ENCODE measurements at regions of chr6 and their contacts with region 1.

Region 1: DNA sequence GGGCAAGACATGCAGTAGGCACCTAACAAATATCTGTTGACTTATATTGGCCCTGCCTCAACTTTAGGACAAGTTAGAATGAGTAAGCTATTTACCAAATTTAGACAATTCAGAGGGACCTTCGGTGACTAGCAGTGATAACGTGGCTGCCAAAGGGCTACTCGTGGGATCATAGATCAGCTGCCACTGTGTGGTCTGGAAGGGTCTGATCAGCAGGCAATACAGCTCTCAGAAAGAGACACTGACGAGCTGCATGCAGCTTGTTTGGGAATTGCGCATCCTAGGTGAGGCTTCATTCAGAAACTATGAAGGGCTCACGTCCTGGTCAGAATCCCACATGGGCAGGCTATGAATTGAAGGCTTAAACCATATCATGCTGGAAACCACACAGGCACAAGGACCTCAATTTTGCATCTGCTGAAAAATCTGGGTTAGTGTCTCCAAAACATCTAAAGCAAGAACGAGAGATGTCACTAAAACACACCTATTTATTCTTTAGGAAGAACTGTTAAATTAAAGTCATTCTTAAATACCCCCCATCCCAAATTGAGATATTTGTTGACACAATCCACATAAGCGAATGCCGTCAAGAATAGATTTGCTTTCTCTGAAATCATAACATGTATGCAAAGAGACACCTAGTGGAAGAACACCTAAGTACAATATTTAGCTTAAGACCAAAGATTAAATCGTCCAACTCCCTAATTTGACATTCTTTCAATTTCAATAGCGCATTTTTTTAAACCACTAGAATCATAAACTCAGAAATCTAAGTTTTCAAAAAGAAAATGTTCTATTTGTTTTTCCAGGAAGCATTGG is 79.6 kb downstream of the IPCEF1 start:
- DNase-seq: no peak
- H3K4me3 ChIP-seq: peak overlapping the region in 2 of 3 donors; percentile 35 to 48
- H3K27ac ChIP-seq: no peak overlapping the region
- H3K4me1 ChIP-seq: no peaks in the 10 kb centered on the region
- H3K27me3 ChIP-seq: no peaks in the 10 kb centered on the region
- CTCF ChIP-seq: peak; percentile 63 to 74 (median 66)
- POLR2A ChIP-seq: no peak

Region 2: DNA sequence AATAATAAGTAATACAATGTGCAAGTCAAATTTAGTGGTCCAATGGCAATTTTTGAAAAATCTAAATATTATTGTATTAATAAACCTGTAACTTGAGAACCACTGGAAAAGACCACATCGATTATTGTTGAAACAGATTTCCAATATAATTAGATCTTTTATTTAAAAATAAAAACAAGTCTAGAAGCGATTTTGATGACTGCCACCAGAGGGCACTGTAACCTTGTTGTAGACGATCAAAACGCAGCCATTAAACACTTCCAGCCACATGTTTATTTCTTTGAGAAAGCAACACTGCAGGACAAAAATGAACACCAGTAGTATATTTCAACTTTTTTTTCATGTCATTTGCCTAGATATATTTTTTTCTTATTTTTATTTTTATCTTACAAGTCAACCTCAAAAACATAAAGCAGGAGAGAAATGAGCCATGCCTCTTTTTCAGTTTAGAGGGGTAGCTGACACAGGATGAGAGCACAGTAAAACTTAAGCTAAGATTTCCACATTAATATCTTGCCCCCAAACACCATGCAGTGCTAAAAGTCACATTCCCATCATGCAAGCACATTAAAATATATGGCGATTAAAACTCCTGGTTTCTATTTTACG is 122.6 kb before region 1 on chr6:
- intact Hi-C with region 1: loop called (anchors 5 kb)
- DNase-seq: peak in 1 of 2 donors; percentile 38
- H3K4me3 ChIP-seq: no peak overlapping the region
- H3K27ac ChIP-seq: no peak overlapping the region
- H3K4me1 ChIP-seq: no peaks in the 10 kb centered on the region
- H3K27me3 ChIP-seq: no peaks in the 10 kb centered on the region
- CTCF ChIP-seq: peak; percentile 70 to 87 (median 86)
- POLR2A ChIP-seq: no peak

Region 3: GRCh38 chr6:154969796-154970195 is 692.8 kb after region 1 on chr6:
- intact Hi-C with region 1: loop called (anchors 5 kb)
- DNase-seq: no peak
- H3K4me3 ChIP-seq: no peak overlapping the region
- H3K27ac ChIP-seq: no peak overlapping the region
- H3K4me1 ChIP-seq: no peaks in the 10 kb centered on the region
- H3K27me3 ChIP-seq: no peaks in the 10 kb centered on the region
- CTCF ChIP-seq: no peak
- POLR2A ChIP-seq: no peak